ENCODE measurements at regions of chr5 and their contacts with region 1.

Region 1: GRCh38 chr5:175534070-175534932 is 55.9 kb downstream of the SFXN1 start:
- DNase-seq: peak; percentile 13
- ATAC-seq: peak; percentile 99
- H3K4me3 ChIP-seq: no peak overlapping the region
- H3K27ac ChIP-seq: no peak overlapping the region
- H3K4me1 ChIP-seq: peaks cover 7% of the 10 kb centered on the region
- H3K27me3 ChIP-seq: no peaks in the 10 kb centered on the region
- CTCF ChIP-seq: peak; percentile 99 to 100 (median 99)
- EP300 ChIP-seq: no peak
- POLR2A ChIP-seq: no peak
- RAD21 ChIP-seq: peak; percentile 84

Region 2: GRCh38 chr5:175638305-175638704 is 104.0 kb after region 1 on chr5:
- CTCF ChIA-PET with region 1: no interaction called
- POLR2A ChIA-PET with region 1: no interaction called
- RAD21 ChIA-PET with region 1: no interaction called
- SMC1A ChIA-PET with region 1: no interaction called
- in situ Hi-C with region 1: no loop called
- intact Hi-C with region 1: no loop called
- DNase-seq: no peak
- ATAC-seq: no peak
- H3K4me3 ChIP-seq: no peak overlapping the region
- H3K27ac ChIP-seq: no peak overlapping the region
- H3K4me1 ChIP-seq: no peaks in the 10 kb centered on the region
- H3K27me3 ChIP-seq: no peaks in the 10 kb centered on the region; a peak in 1 of 4 replicates
- CTCF ChIP-seq: no peak
- EP300 ChIP-seq: no peak
- POLR2A ChIP-seq: no peak
- RAD21 ChIP-seq: no peak

Region 3: DNA sequence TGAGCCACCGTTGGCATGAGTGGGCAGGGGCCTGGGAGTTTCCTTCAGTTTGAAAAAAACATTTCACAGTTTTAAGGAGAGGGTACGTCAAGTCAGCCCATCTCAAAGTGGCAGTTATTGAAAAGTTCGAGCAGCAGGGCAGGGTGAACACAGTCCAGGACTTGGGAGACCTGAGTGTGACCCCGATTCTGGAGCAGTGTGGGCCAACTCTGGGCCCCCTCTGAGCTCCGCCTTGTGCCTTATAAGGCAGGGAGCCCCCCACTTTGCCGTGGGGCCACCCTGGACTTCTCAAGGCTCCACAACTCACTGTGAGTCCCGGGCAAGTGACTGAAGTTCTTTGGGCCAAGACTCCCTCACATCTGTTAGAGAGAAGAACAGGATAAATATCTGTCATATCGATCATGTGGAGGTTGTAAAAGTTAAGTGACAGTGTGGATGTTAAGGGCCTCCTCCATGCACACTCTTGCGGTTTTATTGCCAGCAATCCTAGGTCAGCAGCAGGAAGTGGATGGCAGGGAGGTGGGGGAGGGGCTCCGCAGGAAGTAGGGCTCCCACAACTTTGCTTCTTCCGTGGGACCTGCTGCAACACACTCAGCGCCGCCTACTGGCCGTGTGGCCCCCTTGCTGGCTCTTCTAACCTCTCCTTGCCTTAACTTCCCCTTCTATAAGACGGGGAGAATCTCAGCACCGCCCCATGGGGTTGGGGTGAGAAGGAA is 162.0 kb after region 1 on chr5:
- CTCF ChIA-PET with region 1: interaction called, 11 read pairs
- POLR2A ChIA-PET with region 1: no interaction called
- RAD21 ChIA-PET with region 1: interaction called, 6 read pairs
- SMC1A ChIA-PET with region 1: no interaction called
- in situ Hi-C with region 1: loop called (anchors 5 kb)
- intact Hi-C with region 1: loop called (anchors 1 kb)
- DNase-seq: peak; percentile 1
- ATAC-seq: peak; percentile 46
- H3K4me3 ChIP-seq: no peak overlapping the region
- H3K27ac ChIP-seq: no peak overlapping the region
- H3K4me1 ChIP-seq: no peaks in the 10 kb centered on the region
- H3K27me3 ChIP-seq: peaks cover under 1 to 1% of the 10 kb centered on the region in 2 experiments; a peak in 2 of 4 replicates
- CTCF ChIP-seq: peak; percentile 38 to 63 (median 56)
- EP300 ChIP-seq: no peak
- POLR2A ChIP-seq: no peak
- RAD21 ChIP-seq: peak; percentile 36

Region 4: GRCh38 chr5:175718401-175719108 is 184.3 kb after region 1 on chr5:
- CTCF ChIA-PET with region 1: interaction called, 22 read pairs
- POLR2A ChIA-PET with region 1: no interaction called
- RAD21 ChIA-PET with region 1: interaction called, 10 read pairs
- SMC1A ChIA-PET with region 1: interaction called, 6 read pairs
- in situ Hi-C with region 1: no loop called
- intact Hi-C with region 1: loop called (anchors 5 kb)
- DNase-seq: no peak
- ATAC-seq: no peak
- H3K4me3 ChIP-seq: no peak overlapping the region
- H3K27ac ChIP-seq: no peak overlapping the region
- H3K4me1 ChIP-seq: no peaks in the 10 kb centered on the region
- H3K27me3 ChIP-seq: no peaks in the 10 kb centered on the region
- CTCF ChIP-seq: peak; percentile 32 to 40 (median 38); a peak in 3 of 6 replicates
- EP300 ChIP-seq: no peak
- POLR2A ChIP-seq: no peak
- RAD21 ChIP-seq: peak; percentile 38; the same call in 1 of the 2 replicates